Activated naive CD8-positive, alpha-beta T cell treated with anti-CD3 and anti-CD28 coated beads, Interleukin-2, amount 10 ng/mL, durations not matched to agents 7 days and 5 days (primary cell): ENCODE measurements at regions of chr2 and their contacts with region 1.

Region 1: DNA sequence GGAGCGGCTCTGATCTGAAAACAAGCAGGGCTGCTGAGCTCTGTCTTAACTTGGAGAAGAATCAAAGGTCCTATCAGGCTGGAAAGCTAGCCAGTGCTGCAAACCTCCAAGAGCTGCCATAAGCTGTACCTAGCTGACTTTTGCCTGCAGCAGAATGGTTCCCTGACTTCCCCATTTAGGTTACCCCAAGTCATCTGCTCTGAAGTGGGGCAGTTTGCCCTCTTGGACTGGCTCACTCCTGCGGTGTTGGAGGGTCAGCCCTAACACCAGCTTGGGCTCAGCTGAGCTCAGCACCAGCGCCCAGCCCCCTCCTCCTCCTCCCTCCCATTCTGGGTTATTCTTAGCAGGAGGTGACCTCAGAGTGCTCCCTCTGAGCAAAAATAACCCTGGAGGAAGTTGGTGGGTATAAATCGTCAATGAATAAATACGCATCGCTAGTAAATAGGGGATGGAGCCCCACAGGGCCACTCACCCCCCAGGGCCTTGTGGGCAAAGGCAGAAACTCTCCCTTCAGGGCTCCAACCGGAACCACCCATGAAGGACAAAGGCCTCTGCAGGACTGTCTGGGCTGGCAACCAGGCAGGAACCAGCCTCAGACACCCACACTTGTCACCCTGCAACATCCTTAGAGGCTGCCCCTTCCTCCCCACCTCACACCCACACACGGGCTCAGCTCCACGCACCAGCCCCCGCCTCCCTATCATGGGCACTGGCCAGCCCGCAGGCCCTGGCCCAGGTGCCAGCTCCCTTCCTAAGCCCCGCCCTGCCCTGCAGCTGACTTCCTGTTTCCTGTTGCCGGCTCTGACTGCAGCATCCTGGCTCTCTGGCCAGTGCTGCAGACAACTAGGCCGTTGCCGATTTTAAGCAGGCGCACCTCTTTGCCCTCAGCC is 46.9 kb downstream of the DNMT3A start:
- DNase-seq: peak; percentile 83
- ATAC-seq: peak; percentile 89
- H3K4me3 Mint-ChIP-seq: peak overlapping the region; percentile 77
- H3K27ac Mint-ChIP-seq: peak overlapping the region; percentile 93
- H3K4me1 Mint-ChIP-seq: peaks cover 44% of the 10 kb centered on the region
- H3K27me3 Mint-ChIP-seq: no peaks in the 10 kb centered on the region

Region 2: GRCh38 chr2:25252281-25253105 is 42.3 kb before region 1 on chr2:
- POLR2A ChIA-PET with region 1: interaction called, 14 read pairs
- DNase-seq: peak; percentile 68
- ATAC-seq: peak; percentile 64
- H3K4me3 Mint-ChIP-seq: peak overlapping the region; percentile 87
- H3K27ac Mint-ChIP-seq: peak overlapping the region; percentile 84
- H3K4me1 Mint-ChIP-seq: peaks cover 26% of the 10 kb centered on the region
- H3K27me3 Mint-ChIP-seq: no peaks in the 10 kb centered on the region

Region 3: DNA sequence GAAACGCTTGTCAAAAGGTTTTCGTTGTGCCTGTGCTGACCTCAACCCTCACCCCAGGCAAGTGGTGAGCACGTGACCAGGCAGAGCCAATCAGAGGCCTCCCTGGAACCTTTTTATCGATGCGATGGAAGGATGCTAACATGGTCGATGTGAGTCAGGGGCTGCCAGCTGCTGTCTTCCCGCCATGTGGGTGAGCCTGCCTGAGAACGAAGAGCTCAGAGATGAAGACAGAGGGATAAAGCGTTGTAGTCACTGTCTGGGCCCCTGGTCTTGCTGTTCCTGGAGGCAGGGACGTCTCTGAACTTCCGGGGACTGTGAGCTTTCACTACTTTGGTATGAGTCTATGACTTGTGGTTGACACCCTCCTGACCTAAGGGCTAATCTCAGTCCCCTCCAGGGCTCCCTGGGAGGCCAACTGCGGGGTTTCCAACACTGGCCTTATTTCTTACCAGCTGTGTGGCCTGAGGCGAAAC is 28.3 kb after region 1 on chr2:
- POLR2A ChIA-PET with region 1: no interaction called
- DNase-seq: no peak
- ATAC-seq: peak; percentile 51
- H3K4me3 Mint-ChIP-seq: peak overlapping the region; percentile 71
- H3K27ac Mint-ChIP-seq: peak overlapping the region; percentile 82
- H3K4me1 Mint-ChIP-seq: peaks cover 29% of the 10 kb centered on the region
- H3K27me3 Mint-ChIP-seq: no peaks in the 10 kb centered on the region

Region 4: DNA sequence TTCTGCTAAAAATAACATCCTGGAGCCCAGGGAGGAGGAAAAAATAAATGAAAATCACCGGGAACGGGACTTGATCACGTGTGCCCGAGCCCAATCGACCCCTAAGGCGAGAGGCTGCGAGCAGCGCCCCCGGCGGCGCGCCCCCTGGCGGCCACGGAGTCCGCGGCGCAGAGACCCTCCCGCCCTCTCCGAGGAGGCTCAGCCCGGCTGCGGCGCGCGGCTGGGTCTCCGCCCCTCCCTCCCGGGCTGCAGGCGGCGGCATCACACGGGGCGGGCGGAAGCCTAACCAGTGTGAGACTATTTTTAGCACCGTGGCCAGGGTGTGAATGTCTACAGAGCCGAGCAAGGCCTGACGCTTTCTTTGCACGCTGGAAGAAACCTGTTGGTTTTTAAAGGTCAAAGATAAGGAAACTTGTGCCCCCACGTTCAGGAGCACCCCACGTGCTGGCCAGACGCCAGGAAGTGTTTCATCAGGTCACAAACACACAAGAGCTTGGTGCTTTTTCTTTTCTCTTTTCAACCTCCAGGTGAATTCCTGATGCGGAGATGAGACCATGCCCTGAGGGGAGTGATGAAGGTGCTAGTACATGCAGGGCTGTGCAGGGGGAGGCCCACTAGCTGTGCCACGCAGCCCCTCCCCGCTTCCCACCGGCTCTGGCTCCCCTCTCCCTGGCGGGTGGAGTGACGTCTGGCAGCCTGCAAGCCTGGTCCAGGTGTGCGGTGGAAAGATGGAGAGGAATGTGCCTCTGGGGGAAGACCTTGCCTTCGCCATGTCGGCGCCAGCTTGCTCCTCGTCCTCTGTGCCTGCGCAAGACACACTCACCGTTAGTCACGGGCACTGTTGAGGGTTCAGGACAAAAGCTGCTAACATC is 82.2 kb after region 1 on chr2:
- POLR2A ChIA-PET with region 1: no interaction called
- DNase-seq: peak; percentile 97
- ATAC-seq: peak; percentile 99
- H3K4me3 Mint-ChIP-seq: peak overlapping the region; percentile 71
- H3K27ac Mint-ChIP-seq: peak overlapping the region; percentile 98
- H3K4me1 Mint-ChIP-seq: peaks cover 26% of the 10 kb centered on the region
- H3K27me3 Mint-ChIP-seq: no peaks in the 10 kb centered on the region